ENCODE measurements at regions of chr12 and their contacts with region 1.

Region 1: DNA sequence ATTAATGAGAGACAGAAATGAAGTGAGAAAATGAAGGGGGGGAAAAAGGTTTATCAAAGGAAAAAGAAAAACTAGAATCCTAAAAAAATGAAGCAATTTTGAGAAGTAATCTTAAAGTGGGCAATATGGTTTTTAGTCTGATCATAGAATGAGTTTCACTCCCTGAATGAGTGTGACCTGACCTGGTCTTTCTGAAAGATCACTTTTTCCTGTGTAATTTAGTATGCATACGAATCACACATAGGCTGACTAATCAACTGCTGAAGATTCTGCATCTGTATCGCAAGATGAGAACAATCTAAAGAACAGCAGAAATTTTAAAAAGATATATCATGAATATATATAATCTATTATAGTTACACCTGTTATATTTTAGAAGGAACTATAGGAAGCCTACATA is 11.3 kb downstream of the GNPTAB start:
- DNase-seq: no peak
- H3K4me3 Mint-ChIP-seq: peak overlapping the region; percentile 67
- H3K27ac Mint-ChIP-seq: peak overlapping the region; percentile 93
- H3K4me1 Mint-ChIP-seq: peaks cover 49% of the 10 kb centered on the region
- H3K27me3 Mint-ChIP-seq: no peaks in the 10 kb centered on the region

Region 2: DNA sequence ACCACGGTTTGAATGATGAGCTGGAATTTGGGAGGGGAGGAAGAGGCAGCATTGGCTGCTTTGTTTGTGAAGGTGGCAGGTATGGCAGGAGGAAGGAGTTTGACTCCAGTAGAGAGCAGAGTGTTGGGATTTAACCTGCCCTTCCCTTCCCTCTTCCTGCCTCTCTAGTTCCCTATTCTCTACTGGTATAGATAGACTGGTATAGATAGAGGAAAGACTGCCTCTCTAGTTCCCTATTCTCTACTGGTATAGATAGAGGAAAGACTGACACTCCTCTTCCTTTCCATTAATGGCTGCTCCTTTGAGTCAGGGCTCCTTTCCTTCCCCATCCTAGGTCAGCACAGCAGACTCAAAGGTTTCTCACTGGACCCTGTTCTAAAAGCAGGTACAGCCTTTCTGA is 71.8 kb before region 1 on chr12:
- intact Hi-C with region 1: no loop called
- DNase-seq: no peak
- H3K4me3 Mint-ChIP-seq: no peak overlapping the region
- H3K27ac Mint-ChIP-seq: no peak overlapping the region
- H3K4me1 Mint-ChIP-seq: peaks cover 5% of the 10 kb centered on the region
- H3K27me3 Mint-ChIP-seq: no peaks in the 10 kb centered on the region

Region 3: DNA sequence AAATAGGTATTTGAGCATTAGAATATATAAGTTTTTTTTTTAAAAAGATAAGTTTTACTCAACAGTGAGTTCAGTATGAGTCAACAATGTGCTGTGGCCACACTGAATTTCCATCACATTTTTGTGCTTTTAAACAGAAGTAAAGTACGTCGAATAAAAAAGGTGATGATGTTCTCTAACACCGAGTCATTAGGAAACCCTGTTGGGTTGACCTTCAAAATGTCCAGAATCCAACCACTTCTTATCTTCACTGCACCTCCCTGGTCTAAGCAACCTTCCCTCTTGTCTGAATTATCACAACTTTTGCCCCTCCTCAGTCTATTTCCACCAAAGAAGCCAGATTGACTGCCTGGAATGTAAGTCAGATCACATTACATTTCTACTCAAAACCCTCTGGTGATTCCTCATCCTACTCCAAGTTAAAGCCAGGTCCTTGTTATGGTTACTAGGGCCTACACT is 37.2 kb before region 1 on chr12:
- intact Hi-C with region 1: loop called (anchors 1 kb)
- DNase-seq: no peak
- H3K4me3 Mint-ChIP-seq: peak overlapping the region; percentile 9
- H3K27ac Mint-ChIP-seq: peak overlapping the region; percentile 91
- H3K4me1 Mint-ChIP-seq: peaks cover 31% of the 10 kb centered on the region
- H3K27me3 Mint-ChIP-seq: no peaks in the 10 kb centered on the region

Region 4: DNA sequence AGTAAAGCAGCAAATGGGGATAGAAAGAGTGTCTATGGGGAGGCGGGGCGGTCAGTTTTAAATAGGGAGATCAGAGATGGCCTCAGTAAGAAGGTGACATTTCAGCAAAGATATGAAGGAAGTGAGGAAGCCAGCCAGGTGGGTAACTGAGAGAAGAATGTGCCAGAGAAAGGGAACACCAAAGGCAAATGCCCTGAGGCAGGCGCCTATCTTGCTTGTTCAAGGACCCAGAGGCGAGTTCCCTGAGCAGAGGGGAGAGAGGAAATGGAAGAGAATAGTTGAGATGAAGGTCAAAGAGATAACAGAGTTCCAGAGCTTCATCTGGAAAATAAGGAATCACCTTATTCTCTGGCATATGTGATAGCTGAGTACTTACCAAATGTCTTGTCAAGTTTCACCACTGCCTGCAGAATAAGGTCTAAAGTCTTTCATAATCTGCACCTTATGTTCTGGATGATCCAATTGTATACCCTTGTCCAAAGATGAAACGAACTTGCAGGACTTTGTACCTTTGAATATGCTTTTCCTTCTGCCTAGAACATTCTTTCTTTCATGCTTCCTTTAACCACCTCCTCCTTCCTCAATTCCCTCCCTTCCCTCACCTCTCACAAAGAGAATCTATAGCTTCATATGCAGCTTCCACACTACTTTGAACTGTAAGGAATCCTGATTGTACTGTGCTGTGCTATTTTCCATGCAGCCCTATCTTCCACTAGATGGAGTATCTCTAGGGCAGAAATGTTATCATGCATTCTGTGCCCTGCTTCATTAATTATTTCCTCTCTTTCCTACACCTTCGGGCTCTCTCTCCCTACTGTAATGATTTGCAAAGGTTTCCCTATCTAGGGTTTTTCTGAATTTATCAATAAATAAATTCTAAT is 27.2 kb before region 1 on chr12:
- intact Hi-C with region 1: loop called (anchors 1 kb)
- DNase-seq: no peak
- H3K4me3 Mint-ChIP-seq: no peak overlapping the region
- H3K27ac Mint-ChIP-seq: peak overlapping the region; percentile 72
- H3K4me1 Mint-ChIP-seq: peaks cover 40% of the 10 kb centered on the region
- H3K27me3 Mint-ChIP-seq: no peaks in the 10 kb centered on the region

Region 5: GRCh38 chr12:101799774-101800173 is 19.7 kb before region 1 on chr12:
- intact Hi-C with region 1: loop called (anchors 1 kb)
- DNase-seq: no peak
- H3K4me3 Mint-ChIP-seq: peak overlapping the region; percentile 36
- H3K27ac Mint-ChIP-seq: peak overlapping the region; percentile 71
- H3K4me1 Mint-ChIP-seq: peaks cover 45% of the 10 kb centered on the region
- H3K27me3 Mint-ChIP-seq: no peaks in the 10 kb centered on the region